T-cell (primary cell): ENCODE measurements at regions of chr5 and their contacts with region 1.

Region 1: DNA sequence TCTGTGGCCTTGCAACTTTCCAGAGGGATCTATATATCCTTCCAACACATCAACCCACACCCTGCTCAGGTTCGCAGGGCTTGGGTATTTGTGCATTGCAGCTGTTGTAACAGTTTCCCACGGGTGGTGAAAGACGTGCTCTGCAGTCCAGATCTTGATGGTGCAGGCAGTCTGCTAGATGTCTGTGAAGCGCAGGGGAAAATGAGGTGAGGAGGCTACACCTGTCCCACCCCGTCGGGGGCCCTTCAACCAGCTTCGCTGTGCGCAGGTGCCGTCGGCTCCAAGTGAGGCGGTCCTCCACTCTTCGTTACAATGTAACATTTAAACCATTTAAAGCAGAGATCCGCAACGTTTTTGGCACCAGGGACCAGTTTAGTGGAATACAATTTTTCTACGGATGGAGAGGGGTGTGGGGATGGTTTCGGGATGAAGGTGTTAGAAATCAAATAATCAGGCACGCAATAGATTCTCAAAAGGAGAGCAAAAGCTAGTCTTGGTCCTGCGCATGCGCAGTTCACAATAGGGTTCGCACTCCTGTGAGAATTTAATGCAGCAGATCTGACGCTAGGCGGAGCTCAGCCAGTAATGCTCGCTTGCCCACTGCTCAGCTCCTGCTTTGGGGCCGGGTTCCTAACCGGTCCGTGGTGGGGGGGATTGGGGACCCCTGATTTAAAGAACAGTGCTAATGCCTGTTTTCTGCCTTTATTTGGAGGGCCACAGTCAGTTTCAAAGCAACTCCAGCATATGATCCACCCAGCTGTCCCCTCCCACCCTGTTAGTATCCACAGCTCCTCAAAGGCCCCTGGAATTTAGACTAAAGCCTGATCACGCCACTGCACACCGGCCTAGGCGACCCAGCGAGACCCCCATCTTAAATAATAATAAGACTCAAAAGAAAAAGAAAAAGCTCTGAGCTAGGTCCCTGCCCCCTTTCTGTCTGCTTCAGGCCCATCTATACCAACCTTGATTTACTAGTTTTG is 97.1 kb upstream of the SELENOP start:
- DNase-seq: peak; percentile 76 to 96 (median 87)
- ATAC-seq: peak; percentile 88 to 94 (median 92)
- H3K4me3 ChIP-seq: peak overlapping the region; percentile 56 to 61
- H3K4me3 Mint-ChIP-seq: peak overlapping the region; percentile 88 to 98 (median 91)
- H3K27ac ChIP-seq: peak overlapping the region; percentile 38
- H3K27ac Mint-ChIP-seq: peak overlapping the region; percentile 87 to 97
- H3K4me1 ChIP-seq: peaks cover 0 to 12% of the 10 kb centered on the region in 2 experiments
- H3K4me1 Mint-ChIP-seq: peaks cover 11 to 17% (median 16%) of the 10 kb centered on the region in 3 donors
- H3K27me3 ChIP-seq: peaks cover 0 to 3% of the 10 kb centered on the region in 2 experiments
- H3K27me3 Mint-ChIP-seq: peaks cover 3 to 7% of the 10 kb centered on the region in 2 donors

Region 2: DNA sequence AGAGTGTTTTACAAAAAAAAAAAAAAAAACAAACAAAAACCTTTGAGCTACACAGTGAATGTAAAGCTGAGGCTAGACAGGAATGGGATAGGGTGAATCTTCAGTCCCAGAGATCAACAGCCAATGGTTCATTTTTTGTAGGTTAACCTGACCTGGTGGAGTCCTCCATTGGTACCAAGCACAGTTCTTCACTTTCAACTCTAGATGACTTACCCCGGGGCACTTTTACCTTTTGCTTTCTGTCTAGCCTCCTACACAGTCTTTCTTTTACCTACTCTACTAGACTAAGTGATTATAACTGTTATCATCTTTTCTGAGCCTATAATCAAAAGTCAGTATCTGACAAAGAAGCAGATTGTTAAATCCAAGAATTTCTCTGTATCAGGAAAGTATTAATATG is 80.4 kb after region 1 on chr5:
- CTCF ChIA-PET with region 1: interaction called, 5 to 16 read pairs
- POLR2A ChIA-PET with region 1: interaction called in 1 of 2 experiments, 9 read pairs
- DNase-seq: peak in 1 of 35 experiments; percentile 46
- ATAC-seq: no peak
- H3K4me3 ChIP-seq: peak overlapping the region in 1 of 2 donors; percentile 83
- H3K4me3 Mint-ChIP-seq: peak overlapping the region; percentile 83 to 100 (median 100)
- H3K27ac ChIP-seq: peak overlapping the region; percentile 89
- H3K27ac Mint-ChIP-seq: peak overlapping the region; percentile 90 to 100
- H3K4me1 ChIP-seq: peaks cover 25 to 39% of the 10 kb centered on the region in 2 experiments
- H3K4me1 Mint-ChIP-seq: peaks cover 59 to 76% (median 65%) of the 10 kb centered on the region in 3 donors
- H3K27me3 ChIP-seq: no peaks in the 10 kb centered on the region
- H3K27me3 Mint-ChIP-seq: no peaks in the 10 kb centered on the region

Region 3: GRCh38 chr5:43008369-43009153 is 99.8 kb after region 1 on chr5:
- CTCF ChIA-PET with region 1: interaction called, 4 to 34 read pairs
- POLR2A ChIA-PET with region 1: interaction called in 1 of 2 experiments, 7 read pairs
- DNase-seq: peak; percentile 83 to 97 (median 90)
- ATAC-seq: peak; percentile 65 to 72 (median 71)
- H3K4me3 ChIP-seq: peak overlapping the region; percentile 54 to 97
- H3K4me3 Mint-ChIP-seq: peak overlapping the region; percentile 85 to 87 (median 85)
- H3K27ac ChIP-seq: peak overlapping the region; percentile 87
- H3K27ac Mint-ChIP-seq: peak overlapping the region; percentile 96 to 99
- H3K4me1 ChIP-seq: peaks cover 22 to 34% of the 10 kb centered on the region in 2 experiments
- H3K4me1 Mint-ChIP-seq: peaks cover 40 to 51% (median 42%) of the 10 kb centered on the region in 3 donors
- H3K27me3 ChIP-seq: no peaks in the 10 kb centered on the region
- H3K27me3 Mint-ChIP-seq: no peaks in the 10 kb centered on the region

Region 4: DNA sequence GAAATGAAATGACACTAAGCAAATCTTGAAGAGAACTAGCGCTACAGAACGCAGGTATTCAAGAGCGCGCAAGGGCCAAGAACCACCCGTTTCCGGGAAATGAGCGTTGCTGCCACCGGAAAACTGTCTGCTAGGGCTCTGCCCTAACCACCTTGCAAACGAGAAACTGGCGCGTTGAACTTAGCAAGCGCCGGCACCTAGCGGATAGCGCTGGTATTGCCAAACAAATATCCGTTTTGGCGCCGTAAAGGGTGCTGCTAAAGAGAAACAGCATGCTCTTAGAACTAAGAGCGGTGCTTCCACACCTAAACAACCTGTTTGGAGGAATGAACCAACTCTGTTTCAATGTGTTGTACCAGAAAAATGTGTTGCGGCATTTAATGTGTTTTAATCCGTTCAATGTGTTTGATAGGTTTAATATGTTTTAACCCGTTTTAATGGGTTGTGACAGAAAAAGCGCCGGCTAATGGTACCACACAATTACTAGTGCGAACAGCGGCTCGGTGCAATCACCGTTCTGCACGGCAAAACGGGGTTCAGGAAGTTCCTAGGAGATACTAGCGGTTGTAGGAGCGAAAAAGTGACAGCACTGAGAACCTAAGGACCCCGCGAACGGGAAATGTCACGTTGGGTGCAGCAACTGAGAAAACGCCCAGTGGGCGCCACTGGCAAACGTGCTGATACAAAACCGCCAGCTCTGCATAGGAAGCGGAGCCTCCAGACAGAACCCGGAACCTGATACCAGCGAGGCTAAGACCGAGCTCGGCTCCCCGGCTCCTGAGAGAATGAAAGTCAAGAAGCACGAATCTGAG is 131.7 kb after region 1 on chr5 and contains the start of gene ANXA2R:
- CTCF ChIA-PET with region 1: interaction called in 1 of 2 experiments, 10 read pairs
- POLR2A ChIA-PET with region 1: interaction called, 5 to 7 read pairs
- DNase-seq: peak; percentile 86 to 97 (median 95)
- ATAC-seq: peak; percentile 59 to 71 (median 63)
- H3K4me3 ChIP-seq: peak within 1 kb of the TSS; percentile 82 to 99
- H3K4me3 Mint-ChIP-seq: peak within 1 kb of the TSS; percentile 93 to 100 (median 95)
- H3K27ac ChIP-seq: peak within 1 kb of the TSS; percentile 98
- H3K27ac Mint-ChIP-seq: peak within 1 kb of the TSS; percentile 98 to 99
- H3K4me1 ChIP-seq: peaks cover 15 to 67% of the 10 kb centered on the region in 2 experiments
- H3K4me1 Mint-ChIP-seq: peaks cover 48 to 61% (median 48%) of the 10 kb centered on the region in 3 donors
- H3K27me3 ChIP-seq: no peaks in the 10 kb centered on the region
- H3K27me3 Mint-ChIP-seq: no peaks in the 10 kb centered on the region
- total RNA-seq, gene ANXA2R: 47.8 to 64.1 (median 53.1) TPM

Region 5: GRCh38 chr5:43389679-43390329 is 481.0 kb after region 1 on chr5:
- CTCF ChIA-PET with region 1: interaction called, 3 to 13 read pairs
- POLR2A ChIA-PET with region 1: no interaction called
- DNase-seq: peak in 25 of 35 experiments; percentile 1 to 75 (median 23)
- ATAC-seq: peak; percentile 66 to 81 (median 78)
- H3K4me3 ChIP-seq: no peak overlapping the region
- H3K4me3 Mint-ChIP-seq: no peak overlapping the region
- H3K27ac ChIP-seq: no peak overlapping the region
- H3K27ac Mint-ChIP-seq: peak overlapping the region; percentile 9 to 40
- H3K4me1 ChIP-seq: no peaks in the 10 kb centered on the region
- H3K4me1 Mint-ChIP-seq: peaks cover 20 to 35% (median 25%) of the 10 kb centered on the region in 3 donors
- H3K27me3 ChIP-seq: no peaks in the 10 kb centered on the region
- H3K27me3 Mint-ChIP-seq: no peaks in the 10 kb centered on the region